H1 (cell line): ENCODE measurements at regions of chr11 and their contacts with region 1.

Region 1: GRCh38 chr11:73376160-73376802 is at the start of gene RELT:
- DNase-seq: peak; percentile 71 to 100
- H3K4me3 ChIP-seq: peak within 1 kb of the TSS; percentile 48 to 88 (median 72)
- H3K27ac ChIP-seq: no peak within 1 kb of the TSS
- H3K4me1 ChIP-seq: peaks cover 3 to 13% (median 8%) of the 10 kb centered on the region in 4 experiments
- H3K27me3 ChIP-seq: peaks cover 0 to 15% (median 9%) of the 10 kb centered on the region in 4 experiments; a peak in 4 of 7 replicates
- CTCF ChIP-seq: peak in 2 of 3 experiments; percentile 87 to 96; a peak in 3 of 4 replicates
- EP300 ChIP-seq: no peak; a peak in 1 of 3 replicates
- POLR2A ChIP-seq: peak in 1 of 2 experiments; percentile 93; a peak in 2 of 3 replicates
- RAD21 ChIP-seq: peak; percentile 49 to 56
- total RNA-seq, gene RELT: 5.3 and 5.7 TPM in 2 replicates

Region 2: DNA sequence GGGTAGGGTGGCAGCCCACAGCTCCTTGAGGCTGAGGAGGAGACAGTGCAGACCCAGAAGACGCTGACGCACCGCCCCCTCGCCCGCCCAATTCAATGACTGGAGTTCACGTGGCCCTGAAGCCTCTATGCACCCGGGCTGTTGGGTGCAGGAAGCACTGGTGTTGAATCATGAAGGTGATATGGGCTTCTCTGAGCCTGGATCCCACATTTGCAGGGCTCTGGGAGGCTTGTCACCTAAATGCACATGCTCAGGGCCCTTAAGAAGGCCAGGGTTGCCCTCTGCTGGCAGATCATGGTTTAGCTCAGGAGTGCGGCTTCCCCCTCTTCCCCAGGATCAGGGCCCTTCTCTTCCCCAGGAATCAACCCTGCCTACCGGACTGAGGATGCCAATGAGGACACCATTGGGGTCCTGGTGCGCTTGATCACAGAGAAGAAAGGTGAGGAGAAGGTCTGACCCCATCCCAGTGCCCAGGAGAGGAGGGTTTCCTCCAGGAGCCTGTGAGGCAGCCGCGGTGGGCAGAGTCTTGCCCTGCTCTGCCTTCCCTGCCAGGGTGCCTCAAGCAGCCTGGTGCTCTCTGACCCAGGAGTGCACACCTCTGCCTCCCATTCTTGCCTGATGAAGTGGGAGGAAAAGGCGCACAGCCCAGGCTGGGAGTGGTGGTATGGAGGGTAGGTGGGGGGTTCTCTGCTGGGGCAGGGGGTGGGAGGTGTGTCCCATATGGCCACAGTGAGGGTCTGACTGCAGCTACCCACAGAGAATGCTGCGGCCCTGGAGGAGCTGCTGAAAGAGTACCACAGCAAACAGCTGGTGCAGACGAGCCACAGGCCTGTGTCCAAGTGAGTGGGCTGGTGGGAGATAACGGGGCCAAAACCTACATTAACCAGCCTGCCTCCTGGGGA is 17.4 kb after region 1 on chr11:
- CTCF ChIA-PET with region 1: interaction called, 42 read pairs
- POLR2A ChIA-PET with region 1: interaction called, 5 read pairs
- DNase-seq: peak; percentile 61 to 89
- H3K4me3 ChIP-seq: no peak overlapping the region
- H3K27ac ChIP-seq: no peak overlapping the region
- H3K4me1 ChIP-seq: no peaks in the 10 kb centered on the region; a peak in 1 of 7 replicates
- H3K27me3 ChIP-seq: no peaks in the 10 kb centered on the region
- CTCF ChIP-seq: peak; percentile 89 to 99 (median 96)
- EP300 ChIP-seq: no peak
- POLR2A ChIP-seq: no peak
- RAD21 ChIP-seq: peak; percentile 95 to 97

Region 3: GRCh38 chr11:73412308-73412707 is 36.0 kb after region 1 on chr11:
- CTCF ChIA-PET with region 1: no interaction called
- POLR2A ChIA-PET with region 1: no interaction called
- DNase-seq: no peak
- H3K4me3 ChIP-seq: no peak overlapping the region
- H3K27ac ChIP-seq: no peak overlapping the region
- H3K4me1 ChIP-seq: no peaks in the 10 kb centered on the region
- H3K27me3 ChIP-seq: no peaks in the 10 kb centered on the region
- CTCF ChIP-seq: no peak
- EP300 ChIP-seq: no peak
- POLR2A ChIP-seq: no peak
- RAD21 ChIP-seq: no peak

Region 4: DNA sequence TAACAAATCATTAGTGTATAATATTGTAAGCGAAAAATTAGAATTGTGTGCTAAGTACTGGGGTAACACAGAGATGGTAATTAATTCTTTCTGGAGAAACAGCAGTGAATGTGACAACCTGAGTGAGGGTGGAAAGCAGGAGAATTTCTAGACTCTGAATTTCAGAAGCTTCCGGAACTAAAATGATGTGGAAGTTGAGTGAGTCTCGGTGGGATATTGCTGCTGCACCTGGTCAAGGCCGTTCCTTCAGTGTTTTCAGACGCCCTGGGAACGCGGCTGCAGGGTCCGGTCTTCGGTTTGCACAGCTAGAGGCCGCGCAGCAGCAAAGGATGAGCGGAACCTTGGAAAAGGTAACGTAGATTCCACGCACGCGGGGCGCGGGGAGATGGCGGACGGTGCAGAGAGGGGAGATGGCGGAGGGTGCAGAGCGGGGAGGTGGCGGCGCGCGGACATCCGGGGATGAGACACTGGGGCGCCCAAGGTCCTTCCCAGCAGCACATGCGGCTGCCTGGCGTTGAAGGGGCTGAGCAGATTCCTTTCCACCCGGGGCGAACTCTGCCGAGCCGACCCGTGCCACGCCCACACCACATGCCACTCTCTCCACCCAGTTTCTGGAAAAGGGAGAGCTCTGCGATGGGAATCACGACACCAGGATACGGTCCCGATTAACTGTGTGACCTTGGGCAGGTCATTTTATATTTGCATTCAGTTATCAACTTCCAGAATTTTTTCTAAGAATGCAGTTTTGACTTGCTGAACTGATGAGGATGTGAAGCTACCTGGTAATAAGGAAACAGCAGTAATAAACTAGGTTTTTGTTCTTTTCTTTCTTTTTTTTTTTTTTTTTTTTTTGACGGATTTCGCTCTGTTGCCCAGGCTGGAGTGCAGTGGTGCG is 411.6 kb after region 1 on chr11 and contains the start of gene MRPL48:
- CTCF ChIA-PET with region 1: no interaction called
- POLR2A ChIA-PET with region 1: no interaction called
- DNase-seq: peak; percentile 78 to 94
- H3K4me3 ChIP-seq: peak within 1 kb of the TSS; percentile 74 to 98 (median 88)
- H3K27ac ChIP-seq: peak within 1 kb of the TSS; percentile 98
- H3K4me1 ChIP-seq: peaks cover 3 to 8% (median 6%) of the 10 kb centered on the region in 4 experiments; a peak in 4 of 7 replicates
- H3K27me3 ChIP-seq: no peaks in the 10 kb centered on the region
- CTCF ChIP-seq: no peak
- EP300 ChIP-seq: peak in 1 of 2 experiments; percentile 62; a peak in 1 of 3 replicates
- POLR2A ChIP-seq: peak; percentile 77 to 98
- RAD21 ChIP-seq: no peak; a peak in 1 of 4 replicates
- total RNA-seq, gene MRPL48: 59.9 and 60.7 TPM in 2 replicates